ENCODE measurements at regions of chr10 and their contacts with region 1.

Region 1: DNA sequence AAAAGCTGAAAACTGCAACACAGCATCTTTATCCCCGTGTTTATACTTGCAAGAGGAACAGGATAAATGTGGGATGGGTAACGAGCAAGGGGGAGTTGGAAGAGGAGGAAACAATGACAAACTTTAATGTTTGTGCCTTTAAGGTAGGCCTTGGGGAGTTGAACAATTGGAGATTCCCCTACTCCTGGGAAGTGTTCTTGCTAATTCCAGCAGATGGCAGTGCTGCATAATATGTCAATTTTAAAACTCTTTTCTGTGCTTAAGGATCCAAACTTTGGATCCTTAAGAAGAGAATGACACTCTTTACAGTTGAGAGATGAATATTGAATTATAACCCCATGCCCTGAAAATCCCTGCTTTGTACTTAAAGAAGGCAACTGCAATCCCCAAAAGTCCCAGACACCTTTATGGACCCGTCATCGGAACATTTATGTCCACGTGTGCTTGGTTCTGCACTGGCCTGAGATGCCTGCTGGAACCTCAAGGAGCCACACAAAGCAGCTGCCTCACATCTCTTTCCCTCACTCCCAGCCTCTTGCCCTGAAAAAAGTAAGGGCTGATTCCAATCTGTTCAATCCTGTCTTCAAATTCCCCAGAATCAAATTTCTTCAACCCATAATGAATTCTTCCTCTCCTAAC is 12.0 kb downstream of the IFIT5 start:
- DNase-seq: no peak
- ATAC-seq: peak; percentile 70

Region 2: DNA sequence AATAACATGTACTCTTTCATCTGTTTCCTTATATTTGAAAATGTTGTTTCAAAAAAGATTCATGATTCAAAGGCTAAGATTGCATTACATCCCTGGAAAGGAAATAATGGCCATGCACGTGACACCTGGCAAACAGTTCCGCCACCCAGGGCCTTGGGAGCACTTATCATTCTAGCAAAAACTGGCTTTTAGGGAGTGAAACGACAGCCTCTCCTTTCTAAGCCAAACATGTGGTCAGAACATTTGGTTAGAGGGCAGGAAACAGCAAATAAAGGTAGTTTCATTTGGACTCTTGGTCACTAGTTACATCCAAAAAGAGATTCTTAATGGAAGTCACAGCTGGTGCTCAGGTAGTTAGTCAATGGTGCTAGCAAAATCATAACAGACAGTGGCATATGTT is 352.2 kb before region 1 on chr10:
- intact Hi-C with region 1: no loop called
- DNase-seq: peak; percentile 65
- ATAC-seq: peak; percentile 85

Region 3: GRCh38 chr10:89217057-89217990 is 209.0 kb before region 1 on chr10:
- intact Hi-C with region 1: no loop called
- DNase-seq: peak; percentile 53
- ATAC-seq: peak; percentile 51

Region 4: DNA sequence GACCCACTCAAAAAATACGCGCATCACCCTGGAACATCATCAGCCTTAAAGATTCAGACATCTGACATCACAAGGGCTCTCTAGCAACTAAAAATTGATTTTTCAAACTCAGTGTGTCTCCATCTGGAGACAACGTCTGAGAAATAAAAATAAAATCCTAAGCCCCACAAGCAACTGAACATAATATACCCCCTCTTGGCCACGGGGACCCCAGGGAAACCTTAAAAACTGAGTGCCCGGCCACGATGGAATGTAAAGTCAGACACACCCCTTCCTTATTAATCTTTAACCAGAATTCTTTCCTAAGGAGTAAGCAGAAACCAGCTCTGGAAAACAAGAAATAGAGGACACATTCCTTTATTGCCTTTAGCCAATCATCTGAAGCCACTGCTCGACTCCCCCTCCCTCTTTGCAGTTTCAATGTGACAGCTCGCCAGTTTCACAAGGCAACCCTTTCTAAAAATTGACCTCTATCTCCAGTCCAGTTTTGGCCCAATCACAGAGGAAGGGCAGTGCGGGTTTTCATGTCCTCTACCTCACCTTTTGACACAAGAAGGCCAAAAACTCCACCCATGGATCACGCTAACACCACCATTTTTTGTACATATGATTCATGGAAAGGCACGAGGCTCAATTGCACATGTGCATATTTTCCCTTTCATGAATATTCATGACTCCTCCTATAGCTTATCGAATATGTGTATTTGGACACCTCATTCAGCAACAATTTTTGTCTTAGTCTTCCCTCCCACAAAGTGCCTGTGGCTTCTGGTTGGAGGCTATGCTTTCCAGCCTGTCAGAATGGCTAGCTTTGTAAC is 74.4 kb before region 1 on chr10:
- intact Hi-C with region 1: no loop called
- DNase-seq: no peak
- ATAC-seq: peak; percentile 78

Region 5: DNA sequence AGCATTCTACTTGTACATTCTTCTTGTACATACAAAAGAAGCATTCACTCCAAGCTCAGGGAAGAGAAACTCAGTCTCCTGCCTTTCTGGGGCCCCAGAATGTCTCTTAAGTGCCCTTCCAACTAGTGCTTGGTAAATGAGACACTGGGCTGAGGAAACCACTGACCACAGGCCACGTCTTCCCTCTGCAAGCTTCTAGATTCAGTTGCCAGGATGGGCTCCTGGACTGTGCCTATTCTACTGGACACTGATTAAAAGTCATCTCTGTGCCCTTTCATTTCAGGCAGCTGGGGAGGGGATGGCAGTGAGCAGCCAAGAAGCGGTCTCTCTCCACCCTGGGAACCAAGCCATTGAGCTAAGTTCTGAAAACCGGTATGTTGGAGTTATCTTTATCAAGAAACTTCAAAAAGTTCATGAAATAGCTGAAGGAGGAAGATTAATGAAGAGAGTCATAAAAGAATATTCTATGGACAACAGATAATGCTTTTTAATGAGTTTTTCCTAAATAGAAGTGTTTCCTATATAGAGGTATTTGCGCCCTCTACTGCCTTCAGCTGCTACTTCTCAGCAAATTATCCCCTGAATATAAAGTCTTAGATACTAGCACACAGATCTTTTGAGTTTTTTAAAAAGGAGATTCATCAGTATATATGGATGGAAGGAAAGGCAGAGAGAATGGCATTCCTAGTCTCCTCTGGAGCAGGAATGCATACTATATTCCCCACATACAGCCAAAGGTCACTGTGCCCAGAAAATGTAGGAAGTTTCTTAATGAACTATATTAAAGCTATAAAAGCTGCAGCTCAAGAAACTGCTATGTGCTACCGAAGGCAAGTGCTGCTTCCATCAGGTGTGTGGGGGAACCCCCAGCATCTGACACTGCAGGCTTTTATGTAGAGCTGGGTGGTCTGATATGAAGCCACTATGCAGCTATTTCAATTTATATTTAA is 56.9 kb before region 1 on chr10:
- intact Hi-C with region 1: no loop called
- DNase-seq: no peak
- ATAC-seq: no peak

Region 6: GRCh38 chr10:89563861-89564478 is 137.6 kb after region 1 on chr10:
- intact Hi-C with region 1: loop called (anchors 5 kb)
- DNase-seq: no peak
- ATAC-seq: peak; percentile 68